Activated CD4-positive, alpha-beta T cell treated with anti-CD3 and anti-CD28 coated beads for 36 hours (primary cell): ENCODE measurements at regions of chr3 and their contacts with region 1.

Region 1: GRCh38 chr3:46812237-46812791 is 50.9 kb downstream of the MYL3 start:
- DNase-seq: peak; percentile 87
- ATAC-seq: peak; percentile 95
- H3K4me3 Mint-ChIP-seq: peak overlapping the region; percentile 45
- H3K27ac Mint-ChIP-seq: no peak overlapping the region
- H3K4me1 Mint-ChIP-seq: peaks cover 11% of the 10 kb centered on the region
- H3K27me3 Mint-ChIP-seq: peaks cover 6% of the 10 kb centered on the region

Region 2: GRCh38 chr3:46693038-46693891 is 119.0 kb before region 1 on chr3 and contains the start of gene ALS2CL:
- CTCF ChIA-PET with region 1: interaction called, 8 read pairs
- POLR2A ChIA-PET with region 1: no interaction called
- intact Hi-C with region 1: loop called in 1 of 2 experiments (anchors 2 kb)
- DNase-seq: peak; percentile 80
- ATAC-seq: peak; percentile 64
- H3K4me3 Mint-ChIP-seq: peak within 1 kb of the TSS; percentile 73
- H3K27ac Mint-ChIP-seq: peak within 1 kb of the TSS; percentile 55
- H3K4me1 Mint-ChIP-seq: peaks cover 50% of the 10 kb centered on the region
- H3K27me3 Mint-ChIP-seq: no peaks in the 10 kb centered on the region
- total RNA-seq, gene ALS2CL: 3.2 to 3.3 TPM

Region 3: DNA sequence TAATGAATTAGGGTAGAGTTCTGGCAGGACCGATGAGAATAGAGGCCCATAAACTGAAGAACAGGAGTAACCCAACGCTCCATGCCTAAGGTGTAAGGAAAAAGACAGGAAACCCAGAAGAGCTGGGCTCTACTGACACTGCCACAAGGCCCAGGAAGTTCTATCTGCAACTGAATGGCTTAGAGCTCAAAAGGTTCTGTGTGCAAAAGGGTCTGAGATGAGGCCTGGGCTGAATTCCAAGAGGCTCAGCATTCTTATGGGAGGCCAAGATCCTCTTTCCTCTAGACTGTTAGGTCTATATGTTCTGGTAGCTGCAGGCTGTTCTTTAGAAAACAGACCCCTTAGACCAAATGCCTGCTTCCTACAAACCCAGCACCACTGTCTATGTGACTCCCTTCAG is 64.1 kb before region 1 on chr3:
- CTCF ChIA-PET with region 1: interaction called, 7 read pairs
- POLR2A ChIA-PET with region 1: interaction called, 3 read pairs
- intact Hi-C with region 1: loop called in 1 of 2 experiments (anchors 1 kb)
- DNase-seq: no peak
- ATAC-seq: no peak
- H3K4me3 Mint-ChIP-seq: no peak overlapping the region
- H3K27ac Mint-ChIP-seq: no peak overlapping the region
- H3K4me1 Mint-ChIP-seq: peaks cover 2% of the 10 kb centered on the region
- H3K27me3 Mint-ChIP-seq: no peaks in the 10 kb centered on the region